ENCODE measurements at regions of chr12 and their contacts with region 1.

Region 1: DNA sequence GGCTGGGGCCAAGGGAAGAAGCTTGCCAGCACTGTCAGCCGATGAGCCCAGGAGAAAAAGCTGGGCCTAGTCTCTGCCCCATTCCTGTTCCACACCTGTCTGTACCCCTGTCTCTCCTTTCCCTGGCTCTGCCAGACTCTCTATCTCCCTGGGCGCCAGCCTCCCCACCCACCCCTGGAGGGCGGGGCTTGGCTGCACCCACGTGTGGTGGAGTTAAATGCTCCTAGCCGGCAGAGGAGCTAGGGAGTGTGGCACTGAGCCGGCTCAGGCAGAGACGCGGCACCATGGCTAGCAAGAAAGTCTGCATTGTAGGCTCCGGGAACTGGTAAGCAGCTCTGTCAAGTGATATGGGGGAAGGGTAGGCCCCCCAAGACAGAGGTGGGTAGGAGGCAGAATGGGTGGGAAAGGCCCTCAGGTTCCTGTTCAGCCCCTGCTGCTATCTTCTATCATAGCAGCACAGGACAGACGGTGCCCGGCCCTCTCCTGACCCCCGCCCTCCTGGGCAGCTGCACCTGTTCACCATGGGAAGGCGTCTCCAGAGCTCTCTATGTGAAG is at the start of gene GPD1:
- DNase-seq: peak; percentile 77
- H3K4me3 ChIP-seq: no peak within 1 kb of the TSS
- H3K27ac ChIP-seq: peak within 1 kb of the TSS in 1 of 2 donors; percentile 20
- H3K4me1 ChIP-seq: peaks cover 27% of the 10 kb centered on the region
- H3K27me3 ChIP-seq: no peaks in the 10 kb centered on the region
- CTCF ChIP-seq: no peak
- POLR2A ChIP-seq: no peak
- total RNA-seq, gene GPD1: 2.1 to 2.4 TPM

Region 2: GRCh38 chr12:50174971-50175715 is 71.3 kb after region 1 on chr12:
- intact Hi-C with region 1: loop called (anchors 10 kb)
- DNase-seq: no peak
- H3K4me3 ChIP-seq: no peak overlapping the region
- H3K27ac ChIP-seq: no peak overlapping the region
- H3K4me1 ChIP-seq: no peaks in the 10 kb centered on the region
- H3K27me3 ChIP-seq: no peaks in the 10 kb centered on the region
- CTCF ChIP-seq: peak; percentile 65 to 71 (median 68)
- POLR2A ChIP-seq: no peak

Measured in testis (tissue), 5 donors.